ENCODE measurements at regions of chr6 and their contacts with region 1.

Region 1: DNA sequence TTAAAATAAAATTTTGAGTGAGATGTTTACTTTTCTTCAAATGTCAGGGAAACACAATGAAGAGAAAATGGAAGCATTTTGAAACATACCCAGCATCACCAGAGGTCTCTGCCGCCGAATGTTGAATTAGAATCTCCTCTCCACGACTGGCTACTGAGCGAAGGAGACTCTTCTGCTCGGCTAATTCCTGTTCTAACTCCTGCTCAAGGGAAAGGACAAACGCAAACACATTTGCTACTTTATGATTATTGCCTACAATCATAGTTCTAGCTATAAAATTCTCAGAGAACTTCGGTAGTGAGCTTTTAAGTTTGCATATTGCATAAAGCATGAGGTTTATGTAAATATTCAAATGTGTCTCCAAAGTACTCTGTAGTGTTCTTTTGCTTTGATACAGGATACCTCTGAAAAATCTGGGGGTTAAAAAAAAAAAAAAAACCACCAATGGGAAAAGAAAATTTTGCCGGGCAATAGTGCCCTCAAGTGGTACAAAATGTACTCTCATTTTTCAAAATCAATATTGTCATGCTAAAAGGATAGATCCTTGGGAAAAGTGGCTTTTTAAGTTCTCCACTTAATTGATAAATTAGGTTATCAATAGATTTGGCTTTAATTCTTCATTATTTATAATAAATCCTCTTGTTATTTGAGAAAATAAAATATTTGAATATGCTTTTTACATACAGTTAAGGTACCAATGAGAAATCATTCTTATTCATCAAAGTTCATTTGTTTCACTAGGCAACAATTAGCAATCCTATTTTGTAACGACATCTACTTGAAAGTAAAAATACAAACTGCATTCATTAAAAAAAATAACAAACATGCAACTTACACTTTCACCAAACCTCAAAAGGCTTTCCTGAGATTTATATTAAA is 369.0 kb downstream of the SYNE1 start:
- DNase-seq: no peak
- H3K4me3 ChIP-seq: no peak overlapping the region
- H3K27ac ChIP-seq: no peak overlapping the region
- H3K4me1 ChIP-seq: peaks cover 3% of the 10 kb centered on the region
- H3K27me3 ChIP-seq: no peaks in the 10 kb centered on the region
- CTCF ChIP-seq: peak in 3 of 4 experiments; percentile 41 to 49 (median 46)
- POLR2A ChIP-seq: no peak

Region 2: GRCh38 chr6:151440930-151441329 is 827.3 kb before region 1 on chr6:
- intact Hi-C with region 1: loop called (anchors 5 kb)
- DNase-seq: no peak
- H3K4me3 ChIP-seq: no peak overlapping the region
- H3K27ac ChIP-seq: no peak overlapping the region
- H3K4me1 ChIP-seq: no peaks in the 10 kb centered on the region
- H3K27me3 ChIP-seq: no peaks in the 10 kb centered on the region
- CTCF ChIP-seq: peak in 2 of 4 experiments; percentile 32 to 37
- POLR2A ChIP-seq: no peak

Region 3: DNA sequence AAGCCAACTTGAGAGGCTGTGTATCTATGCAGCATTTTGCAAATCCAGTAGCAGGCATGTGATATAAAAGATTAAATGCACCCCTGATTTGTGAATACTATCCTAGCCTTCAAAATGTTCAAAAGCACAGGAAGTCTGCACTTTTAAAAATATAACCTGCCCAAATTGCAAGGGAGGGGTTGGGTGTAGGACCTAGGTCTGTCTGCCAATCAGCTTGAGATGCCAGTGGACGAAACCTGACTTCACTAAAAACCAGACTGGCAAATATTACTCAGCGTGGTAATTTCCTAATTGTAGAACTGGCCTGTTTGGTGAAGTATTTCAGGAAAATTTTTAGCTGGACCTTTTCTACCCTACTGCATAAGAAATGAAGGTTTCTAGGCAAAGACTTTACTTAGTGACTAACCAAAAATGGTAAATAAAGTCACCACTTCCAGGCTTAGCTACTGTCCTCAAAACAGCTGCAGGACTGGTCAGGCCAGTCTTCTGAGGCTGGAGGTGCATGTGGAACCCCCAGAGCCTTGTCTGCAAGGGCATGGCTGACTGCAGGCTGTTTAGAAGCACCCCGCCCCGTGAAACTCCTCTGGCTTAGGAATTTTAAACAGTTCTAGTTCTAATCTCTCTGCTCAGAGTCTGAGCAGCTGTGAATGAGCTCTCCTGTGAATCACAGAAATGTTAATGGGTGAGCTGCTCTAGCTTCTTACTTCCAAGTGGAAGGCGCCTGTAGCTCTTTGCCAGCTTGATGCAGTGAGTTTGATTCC is 565.2 kb before region 1 on chr6:
- intact Hi-C with region 1: loop called (anchors 10 kb)
- DNase-seq: no peak
- H3K4me3 ChIP-seq: no peak overlapping the region
- H3K27ac ChIP-seq: no peak overlapping the region
- H3K4me1 ChIP-seq: no peaks in the 10 kb centered on the region
- H3K27me3 ChIP-seq: no peaks in the 10 kb centered on the region
- CTCF ChIP-seq: no peak
- POLR2A ChIP-seq: no peak

Region 4: GRCh38 chr6:151765444-151765886 is 502.7 kb before region 1 on chr6:
- intact Hi-C with region 1: loop called (anchors 2 kb)
- DNase-seq: peak; percentile 50
- H3K4me3 ChIP-seq: no peak overlapping the region
- H3K27ac ChIP-seq: no peak overlapping the region
- H3K4me1 ChIP-seq: no peaks in the 10 kb centered on the region
- H3K27me3 ChIP-seq: no peaks in the 10 kb centered on the region
- CTCF ChIP-seq: peak; percentile 38 to 77 (median 70)
- POLR2A ChIP-seq: no peak

Region 5: GRCh38 chr6:152054441-152054840 is 213.8 kb before region 1 on chr6:
- intact Hi-C with region 1: no loop called
- DNase-seq: no peak
- H3K4me3 ChIP-seq: no peak overlapping the region
- H3K27ac ChIP-seq: no peak overlapping the region
- H3K4me1 ChIP-seq: no peaks in the 10 kb centered on the region
- H3K27me3 ChIP-seq: no peaks in the 10 kb centered on the region
- CTCF ChIP-seq: no peak
- POLR2A ChIP-seq: no peak

Region 6: DNA sequence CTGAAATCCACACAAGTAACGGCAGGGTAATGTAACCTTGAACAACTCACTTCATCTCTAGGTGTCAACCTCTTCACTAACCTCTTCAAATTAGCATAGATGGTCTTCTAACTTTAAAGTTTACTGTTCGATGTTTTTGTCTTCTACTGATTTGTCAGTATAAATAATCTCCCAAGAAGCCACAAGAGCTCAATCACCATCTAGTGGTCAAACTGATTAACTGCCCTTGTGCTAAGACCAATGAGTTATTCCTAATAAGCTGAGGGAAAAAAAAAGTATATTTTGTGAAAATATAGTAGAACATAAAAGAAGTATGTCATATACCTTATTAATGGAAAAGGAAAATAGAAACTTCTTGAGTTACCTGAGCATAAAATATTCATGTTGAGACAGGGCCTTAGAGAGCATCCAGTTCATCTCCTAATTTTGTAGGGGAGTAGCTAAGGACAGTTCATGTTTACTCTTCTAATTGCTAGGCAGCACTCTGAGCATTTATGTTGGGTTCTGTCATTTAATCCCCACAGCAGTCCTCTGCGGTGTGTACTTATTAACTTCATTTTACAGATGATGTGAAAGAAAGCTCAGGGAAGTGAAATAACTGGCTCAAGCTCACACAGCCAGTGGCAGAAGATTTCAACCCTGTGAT is 143.7 kb before region 1 on chr6:
- intact Hi-C with region 1: loop called (anchors 5 kb)
- DNase-seq: peak; percentile 24
- H3K4me3 ChIP-seq: no peak overlapping the region
- H3K27ac ChIP-seq: no peak overlapping the region
- H3K4me1 ChIP-seq: no peaks in the 10 kb centered on the region
- H3K27me3 ChIP-seq: no peaks in the 10 kb centered on the region
- CTCF ChIP-seq: peak; percentile 23 to 92 (median 76)
- POLR2A ChIP-seq: no peak

Region 7: DNA sequence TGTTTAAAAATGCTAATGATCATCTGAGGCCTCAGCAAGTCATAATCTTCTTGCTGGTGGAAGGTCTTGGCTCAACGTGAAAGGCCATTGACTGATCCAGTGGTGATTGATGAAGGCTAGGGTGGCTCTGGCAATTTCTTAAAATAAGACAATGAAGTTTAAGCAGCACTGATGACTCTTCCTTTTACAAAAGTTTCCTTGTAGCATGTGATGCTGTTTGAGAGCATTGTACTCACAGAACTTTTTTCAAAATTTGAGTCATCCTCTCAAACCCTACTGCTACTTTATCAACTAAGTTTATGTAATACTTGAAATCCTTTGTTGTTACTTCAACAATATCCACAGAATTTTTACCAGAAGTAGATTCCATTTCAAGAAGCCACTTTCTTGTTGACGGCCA is 78.5 kb before region 1 on chr6:
- intact Hi-C with region 1: no loop called
- DNase-seq: no peak
- H3K4me3 ChIP-seq: no peak overlapping the region
- H3K27ac ChIP-seq: no peak overlapping the region
- H3K4me1 ChIP-seq: no peaks in the 10 kb centered on the region
- H3K27me3 ChIP-seq: no peaks in the 10 kb centered on the region
- CTCF ChIP-seq: no peak
- POLR2A ChIP-seq: no peak

Measured in prostate gland (tissue), 2 donors.